Caco-2 (cell line): ENCODE measurements at regions of chr11 and their contacts with region 1.

Region 1: DNA sequence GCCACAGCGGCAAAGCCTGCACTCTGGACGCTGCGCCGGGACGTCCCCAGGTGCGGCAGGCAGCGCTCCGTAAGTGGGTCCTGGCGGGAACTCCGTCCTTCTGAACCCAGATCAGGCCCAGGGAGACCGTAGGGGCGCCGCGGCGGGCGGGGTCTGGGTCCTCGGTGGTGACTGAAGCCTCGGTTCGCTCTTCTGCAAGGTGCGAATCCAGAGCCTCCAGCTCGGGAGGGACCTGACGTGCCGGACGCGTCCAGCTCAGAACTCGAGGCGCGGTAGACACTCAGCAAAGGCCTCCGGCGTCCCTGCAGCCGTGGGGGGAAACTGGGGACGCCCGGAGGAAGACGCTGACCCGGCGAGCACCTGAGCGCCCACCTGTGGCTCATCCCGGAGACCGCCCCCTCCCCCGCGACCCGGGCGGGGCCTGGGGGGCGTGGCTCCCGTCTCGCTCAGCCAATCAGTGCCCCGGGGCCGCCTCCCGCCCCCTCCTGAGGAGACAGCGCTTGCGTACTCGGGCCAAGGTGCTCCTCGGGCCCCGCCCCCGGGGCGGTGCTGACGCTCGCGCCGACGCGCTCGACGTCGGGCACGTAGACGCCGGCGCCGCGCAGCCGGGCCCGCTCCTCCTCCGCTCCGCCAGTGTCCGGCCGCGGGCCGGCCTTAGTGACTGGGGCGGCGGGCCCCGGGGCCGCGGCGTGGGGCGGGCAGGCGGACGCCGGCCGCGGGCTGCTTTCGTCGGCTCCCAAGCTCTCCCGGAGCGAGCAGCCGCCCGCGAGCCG is at the start of gene PPFIA1:
- DNase-seq: peak; percentile 99 to 100
- H3K4me3 ChIP-seq: peak within 1 kb of the TSS; percentile 97
- H3K4me3 Mint-ChIP-seq: peak within 1 kb of the TSS; percentile 91
- H3K27ac Mint-ChIP-seq: peak within 1 kb of the TSS; percentile 84
- H3K4me1 ChIP-seq: peaks cover 11% of the 10 kb centered on the region
- H3K4me1 Mint-ChIP-seq: peaks cover 13% of the 10 kb centered on the region
- H3K27me3 ChIP-seq: no peaks in the 10 kb centered on the region
- H3K27me3 Mint-ChIP-seq: no peaks in the 10 kb centered on the region
- CTCF ChIP-seq: peak; percentile 11 to 57
- total RNA-seq, gene PPFIA1: 148 TPM in 2 replicates

Region 2: GRCh38 chr11:69918938-69919650 is 351.2 kb before region 1 on chr11:
- CTCF ChIA-PET with region 1: no interaction called
- POLR2A ChIA-PET with region 1: no interaction called
- intact Hi-C with region 1: no loop called
- DNase-seq: peak; percentile 86 to 95
- H3K4me3 ChIP-seq: no peak overlapping the region
- H3K4me3 Mint-ChIP-seq: no peak overlapping the region
- H3K27ac Mint-ChIP-seq: peak overlapping the region; percentile 54
- H3K4me1 ChIP-seq: peaks cover 28% of the 10 kb centered on the region
- H3K4me1 Mint-ChIP-seq: peaks cover 6% of the 10 kb centered on the region
- H3K27me3 ChIP-seq: no peaks in the 10 kb centered on the region
- H3K27me3 Mint-ChIP-seq: peaks cover 10% of the 10 kb centered on the region
- CTCF ChIP-seq: peak; percentile 99

Region 3: DNA sequence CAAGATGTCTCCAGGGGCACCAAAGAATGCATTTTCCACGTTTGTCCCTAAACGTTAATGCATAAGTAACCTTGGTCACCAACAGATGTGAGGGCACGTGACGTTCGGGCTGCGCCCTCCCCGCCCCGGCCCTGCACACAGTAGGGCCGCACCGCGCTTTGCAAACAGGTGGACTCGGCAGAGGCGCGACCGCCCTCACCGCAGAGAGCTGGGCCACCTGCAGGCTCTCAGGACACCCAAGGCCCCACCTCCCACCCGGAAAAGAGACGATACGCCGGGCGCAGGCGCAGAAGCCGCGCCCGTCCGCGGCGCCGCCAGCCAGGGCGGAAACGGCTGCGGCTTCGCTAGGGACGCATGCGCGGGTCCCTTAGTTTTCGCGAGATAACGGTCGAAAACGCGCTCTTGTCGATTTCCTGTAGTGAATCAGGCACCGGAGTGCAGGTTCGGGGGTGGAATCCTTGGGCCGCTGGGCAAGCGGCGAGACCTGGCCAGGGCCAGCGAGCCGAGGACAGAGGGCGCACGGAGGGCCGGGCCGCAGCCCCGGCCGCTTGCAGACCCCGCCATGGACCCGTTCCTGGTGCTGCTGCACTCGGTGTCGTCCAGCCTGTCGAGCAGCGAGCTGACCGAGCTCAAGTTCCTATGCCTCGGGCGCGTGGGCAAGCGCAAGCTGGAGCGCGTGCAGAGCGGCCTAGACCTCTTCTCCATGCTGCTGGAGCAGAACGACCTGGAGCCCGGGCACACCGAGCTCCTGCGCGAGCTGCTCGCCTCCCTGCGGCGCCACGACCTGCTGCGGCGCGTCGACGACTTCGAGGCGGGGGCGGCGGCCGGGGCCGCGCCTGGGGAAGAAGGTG is 67.2 kb before region 1 on chr11 and contains the start of gene FADD:
- CTCF ChIA-PET with region 1: interaction called, 7 read pairs
- POLR2A ChIA-PET with region 1: interaction called, 4 read pairs
- intact Hi-C with region 1: loop called (anchors 1 kb)
- DNase-seq: peak; percentile 97 to 98
- H3K4me3 ChIP-seq: peak within 1 kb of the TSS; percentile 94
- H3K4me3 Mint-ChIP-seq: peak within 1 kb of the TSS; percentile 91
- H3K27ac Mint-ChIP-seq: peak within 1 kb of the TSS; percentile 79
- H3K4me1 ChIP-seq: peaks cover 17% of the 10 kb centered on the region
- H3K4me1 Mint-ChIP-seq: peaks cover 16% of the 10 kb centered on the region
- H3K27me3 ChIP-seq: no peaks in the 10 kb centered on the region
- H3K27me3 Mint-ChIP-seq: no peaks in the 10 kb centered on the region
- CTCF ChIP-seq: no peak
- total RNA-seq, gene FADD: 45.8 and 51.3 TPM in 2 replicates

Region 4: DNA sequence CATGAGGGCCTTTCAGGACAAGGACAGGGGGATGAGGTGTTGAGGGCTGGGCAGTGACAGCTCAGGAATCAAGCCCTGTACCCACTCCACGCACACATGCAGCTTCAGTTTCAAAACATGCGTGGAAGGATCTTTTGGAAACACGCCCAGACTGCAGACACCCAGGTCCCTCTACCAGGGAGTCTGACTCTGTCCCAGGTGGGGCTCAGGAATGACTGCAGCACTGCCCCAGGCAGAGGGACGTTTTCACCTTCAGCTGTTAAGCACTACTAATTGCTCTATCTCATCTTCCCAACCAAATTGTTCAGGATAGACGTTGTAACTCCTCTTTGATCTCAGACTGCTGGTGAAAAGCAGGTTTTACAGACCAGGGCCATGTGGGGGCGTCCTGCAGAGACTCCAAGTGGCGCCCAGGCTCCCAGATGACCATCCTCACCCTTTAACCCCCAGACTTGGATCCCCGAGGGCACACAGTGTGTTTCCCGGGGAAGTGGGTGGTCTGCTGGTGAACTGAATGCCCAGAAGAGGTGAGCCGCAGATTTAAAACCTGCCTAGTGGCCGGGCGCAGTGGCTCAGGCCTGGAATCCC is 43.4 kb before region 1 on chr11:
- CTCF ChIA-PET with region 1: no interaction called
- POLR2A ChIA-PET with region 1: interaction called, 10 read pairs
- intact Hi-C with region 1: loop called (anchors 5 kb)
- DNase-seq: peak in 1 of 2 experiments; percentile 69
- H3K4me3 ChIP-seq: no peak overlapping the region
- H3K4me3 Mint-ChIP-seq: no peak overlapping the region
- H3K27ac Mint-ChIP-seq: no peak overlapping the region
- H3K4me1 ChIP-seq: peaks cover 18% of the 10 kb centered on the region
- H3K4me1 Mint-ChIP-seq: peaks cover 6% of the 10 kb centered on the region
- H3K27me3 ChIP-seq: no peaks in the 10 kb centered on the region
- H3K27me3 Mint-ChIP-seq: no peaks in the 10 kb centered on the region
- CTCF ChIP-seq: peak; percentile 45 to 67

Region 5: DNA sequence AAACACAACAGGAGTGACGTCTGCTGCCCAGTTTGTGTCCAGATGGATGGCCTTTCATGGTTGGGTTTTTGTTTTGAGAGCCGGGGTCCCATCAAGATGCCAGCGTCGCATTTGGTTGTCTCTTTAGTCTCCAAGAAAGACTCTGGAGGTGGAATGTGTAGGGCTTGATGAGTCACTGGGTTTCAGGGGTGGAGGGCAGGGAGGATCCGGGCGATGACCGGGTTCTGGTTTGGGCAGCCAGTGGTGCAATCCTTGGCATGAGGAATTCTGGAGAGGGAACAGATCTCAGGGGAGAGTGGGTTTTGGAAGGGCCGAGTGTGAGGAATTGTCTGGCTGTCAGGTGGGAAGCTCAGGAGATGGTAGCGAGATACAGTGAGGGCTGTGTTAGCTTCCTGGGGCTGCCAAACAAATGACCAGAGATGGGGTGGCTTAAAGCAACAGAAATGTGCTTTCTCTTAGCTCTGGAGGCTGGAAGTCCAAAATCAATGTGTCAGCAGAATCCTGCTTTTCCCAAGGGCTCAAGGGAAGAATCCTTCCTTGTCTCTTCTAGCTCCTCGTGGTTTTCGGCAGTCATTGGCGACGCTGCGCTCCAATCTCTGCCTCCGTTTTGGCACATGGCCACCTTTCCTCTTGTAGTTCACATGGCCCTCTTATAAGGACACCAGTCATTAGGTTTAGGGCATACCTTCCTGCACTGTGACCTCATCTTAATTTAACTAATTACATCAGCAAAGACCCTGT is 26.2 kb before region 1 on chr11:
- CTCF ChIA-PET with region 1: interaction called, 8 read pairs
- POLR2A ChIA-PET with region 1: no interaction called
- intact Hi-C with region 1: loop called (anchors 1 kb)
- DNase-seq: no peak
- H3K4me3 ChIP-seq: no peak overlapping the region
- H3K4me3 Mint-ChIP-seq: no peak overlapping the region
- H3K27ac Mint-ChIP-seq: peak overlapping the region; percentile 97
- H3K4me1 ChIP-seq: peaks cover 51% of the 10 kb centered on the region
- H3K4me1 Mint-ChIP-seq: peaks cover 30% of the 10 kb centered on the region
- H3K27me3 ChIP-seq: no peaks in the 10 kb centered on the region
- H3K27me3 Mint-ChIP-seq: no peaks in the 10 kb centered on the region
- CTCF ChIP-seq: no peak